PC-9 (cell line): ENCODE measurements at regions of chr6 and their contacts with region 1.

Region 1: DNA sequence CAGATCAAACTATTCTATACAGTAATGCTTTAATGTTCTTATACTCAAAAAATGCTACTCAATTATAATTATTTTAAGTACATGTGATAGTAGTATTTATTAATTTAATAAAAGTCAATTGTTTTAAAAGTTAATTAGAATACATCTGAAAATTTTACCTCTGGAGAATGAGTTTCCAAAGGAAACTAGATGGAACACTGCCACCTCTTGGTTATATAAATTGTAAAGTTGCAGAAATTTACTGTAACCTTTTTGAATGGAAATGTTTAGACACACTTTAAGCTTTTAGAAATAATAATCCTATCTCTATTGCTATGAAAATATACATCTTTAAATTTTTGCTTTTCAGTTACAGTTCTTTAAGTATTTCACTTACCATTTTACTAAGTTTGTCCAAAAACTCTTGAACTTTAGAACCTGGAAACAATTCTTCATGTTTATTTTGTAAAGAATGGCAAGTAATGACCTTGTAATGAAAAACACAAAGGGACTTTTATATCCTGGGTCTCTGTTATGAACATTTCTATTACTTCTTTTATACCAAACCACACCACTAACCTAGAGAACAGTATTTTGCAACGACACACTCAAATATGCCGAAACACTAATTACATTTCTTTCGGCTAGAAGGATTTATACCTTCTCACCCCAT is 10.9 kb upstream of the BMP5 start:
- DNase-seq: no peak
- H3K4me3 ChIP-seq: no peak overlapping the region
- H3K27ac ChIP-seq: no peak overlapping the region
- H3K4me1 ChIP-seq: peaks cover 9% of the 10 kb centered on the region; the same call in 1 of the 2 replicates
- H3K27me3 ChIP-seq: no peaks in the 10 kb centered on the region
- CTCF ChIP-seq: peak; percentile 74

Region 2: GRCh38 chr6:54958446-54958845 is 927.9 kb before region 1 on chr6:
- CTCF ChIA-PET with region 1: no interaction called
- POLR2A ChIA-PET with region 1: no interaction called
- intact Hi-C with region 1: no loop called
- DNase-seq: no peak
- H3K4me3 ChIP-seq: no peak overlapping the region
- H3K27ac ChIP-seq: no peak overlapping the region
- H3K4me1 ChIP-seq: no peaks in the 10 kb centered on the region
- H3K27me3 ChIP-seq: no peaks in the 10 kb centered on the region
- CTCF ChIP-seq: no peak

Region 3: DNA sequence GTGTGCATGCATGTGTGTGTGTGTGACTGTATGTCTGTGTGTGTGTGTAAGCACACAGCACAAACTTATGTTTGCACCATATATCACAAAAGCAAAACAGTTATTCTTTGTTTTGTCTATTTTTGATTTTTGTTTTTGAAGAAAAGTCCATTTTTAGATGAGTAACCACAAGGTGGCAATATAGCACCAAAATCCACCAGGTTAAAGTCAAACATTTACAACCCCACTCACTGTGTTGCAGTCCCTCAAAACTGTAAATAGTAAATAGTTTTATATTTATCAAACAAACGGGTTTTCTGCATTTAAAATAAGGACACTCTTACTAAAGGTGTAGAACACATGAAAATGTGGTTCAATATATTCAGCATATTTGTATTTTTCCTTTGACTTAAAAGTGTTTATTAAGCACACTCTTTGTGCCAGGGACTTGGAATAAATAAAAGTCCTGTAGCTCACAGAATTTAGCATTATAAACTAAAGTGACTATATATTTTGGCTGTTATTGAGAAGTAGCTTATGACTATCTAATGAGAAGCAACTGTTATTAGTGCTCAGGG is 440.6 kb before region 1 on chr6:
- CTCF ChIA-PET with region 1: no interaction called
- POLR2A ChIA-PET with region 1: no interaction called
- intact Hi-C with region 1: loop called (anchors 1 kb)
- DNase-seq: no peak
- H3K4me3 ChIP-seq: no peak overlapping the region
- H3K27ac ChIP-seq: no peak overlapping the region
- H3K4me1 ChIP-seq: no peaks in the 10 kb centered on the region
- H3K27me3 ChIP-seq: no peaks in the 10 kb centered on the region
- CTCF ChIP-seq: peak; percentile 82

Region 4: GRCh38 chr6:55617272-55617671 is 269.0 kb before region 1 on chr6:
- CTCF ChIA-PET with region 1: no interaction called
- POLR2A ChIA-PET with region 1: no interaction called
- intact Hi-C with region 1: loop called (anchors 1 kb)
- DNase-seq: peak in 1 of 2 experiments; percentile 16
- H3K4me3 ChIP-seq: no peak overlapping the region
- H3K27ac ChIP-seq: no peak overlapping the region
- H3K4me1 ChIP-seq: no peaks in the 10 kb centered on the region
- H3K27me3 ChIP-seq: no peaks in the 10 kb centered on the region
- CTCF ChIP-seq: peak; percentile 64

Region 5: DNA sequence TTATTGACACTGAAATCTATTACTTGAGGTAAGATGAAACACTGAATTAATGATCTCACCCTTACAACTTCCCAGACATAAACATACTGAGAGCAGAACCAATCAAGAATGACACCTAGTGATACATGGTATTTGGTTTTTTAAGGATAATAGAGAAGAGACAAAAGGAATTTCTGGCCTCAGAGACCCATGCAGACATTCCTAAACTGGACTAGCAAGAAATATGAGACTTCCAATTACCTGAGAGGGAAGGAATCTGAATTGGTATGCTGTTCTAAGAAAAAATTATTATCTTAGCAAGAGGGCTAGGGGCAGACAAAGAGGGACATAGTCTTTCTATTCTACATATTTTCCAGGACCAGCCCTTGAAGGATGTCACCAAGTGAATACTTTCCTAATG is 152.1 kb before region 1 on chr6:
- CTCF ChIA-PET with region 1: no interaction called
- POLR2A ChIA-PET with region 1: no interaction called
- intact Hi-C with region 1: loop called (anchors 1 kb)
- DNase-seq: peak; percentile 12 to 64
- H3K4me3 ChIP-seq: no peak overlapping the region
- H3K27ac ChIP-seq: no peak overlapping the region
- H3K4me1 ChIP-seq: 0 out of 2 replicates have a peak, but pooled peaks cover 9% of the 10 kb centered on the region
- H3K27me3 ChIP-seq: no peaks in the 10 kb centered on the region
- CTCF ChIP-seq: no peak

Region 6: DNA sequence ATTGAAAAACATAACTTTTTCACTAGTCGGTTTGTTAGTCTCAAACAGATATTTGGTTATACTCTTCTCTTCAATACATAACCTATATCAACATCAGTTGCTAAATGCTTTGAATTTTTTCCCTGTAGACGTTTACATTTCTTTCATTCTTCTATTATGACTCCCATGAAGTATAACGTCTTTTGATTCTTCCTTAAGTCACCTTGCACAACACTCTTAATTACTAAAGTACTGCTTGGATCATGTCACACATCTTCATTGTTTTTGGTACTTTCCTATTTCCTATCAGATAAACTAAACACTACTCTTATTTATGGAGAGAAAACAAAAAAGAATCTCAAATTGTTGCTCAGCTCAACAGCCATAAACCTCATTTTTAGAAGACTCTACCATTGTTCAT is 12.0 kb after region 1 on chr6:
- CTCF ChIA-PET with region 1: no interaction called
- POLR2A ChIA-PET with region 1: no interaction called
- intact Hi-C with region 1: no loop called
- DNase-seq: peak in 1 of 2 experiments; percentile 38
- H3K4me3 ChIP-seq: no peak overlapping the region
- H3K27ac ChIP-seq: no peak overlapping the region
- H3K4me1 ChIP-seq: no peaks in the 10 kb centered on the region
- H3K27me3 ChIP-seq: no peaks in the 10 kb centered on the region
- CTCF ChIP-seq: no peak

Region 7: DNA sequence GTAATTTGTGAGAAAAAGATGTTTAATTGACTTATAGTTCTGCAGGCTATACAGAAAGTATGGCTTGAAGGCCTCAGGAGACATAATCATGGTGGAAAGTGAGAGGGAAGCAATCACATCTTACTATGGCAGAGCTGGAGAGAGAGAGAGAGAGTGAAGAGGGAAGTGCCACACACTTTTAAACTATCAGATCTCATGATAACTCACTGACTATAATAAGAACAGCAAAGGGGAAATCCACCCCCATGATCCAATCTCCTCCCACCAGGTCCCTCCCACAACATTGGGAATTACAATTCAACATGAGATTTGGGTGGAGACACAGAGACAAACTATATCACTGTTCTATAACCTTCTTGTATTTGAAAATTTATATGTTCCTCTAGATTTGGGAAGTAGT is 106.2 kb after region 1 on chr6:
- CTCF ChIA-PET with region 1: no interaction called
- POLR2A ChIA-PET with region 1: no interaction called
- intact Hi-C with region 1: no loop called
- DNase-seq: no peak
- H3K4me3 ChIP-seq: no peak overlapping the region
- H3K27ac ChIP-seq: no peak overlapping the region
- H3K4me1 ChIP-seq: no peaks in the 10 kb centered on the region
- H3K27me3 ChIP-seq: no peaks in the 10 kb centered on the region
- CTCF ChIP-seq: no peak

Region 8: GRCh38 chr6:56843573-56844349 is 957.5 kb after region 1 on chr6:
- CTCF ChIA-PET with region 1: no interaction called
- POLR2A ChIA-PET with region 1: no interaction called
- intact Hi-C with region 1: no loop called
- DNase-seq: peak; percentile 76 to 84
- H3K4me3 ChIP-seq: peak overlapping the region; percentile 80
- H3K27ac ChIP-seq: peak overlapping the region; percentile 49; the same call in 1 of the 2 replicates
- H3K4me1 ChIP-seq: peaks cover 41% of the 10 kb centered on the region
- H3K27me3 ChIP-seq: no peaks in the 10 kb centered on the region
- CTCF ChIP-seq: peak; percentile 68; the same call in 1 of the 2 replicates